Activated naive CD4-positive, alpha-beta T cell treated with anti-CD3 and anti-CD28 coated beads for 36 hours (primary cell): ENCODE measurements at regions of chr1 and their contacts with region 1.

Region 1: GRCh38 chr1:111720274-111720976 is 18.8 kb downstream of the INKA2 start:
- DNase-seq: no peak
- H3K4me3 Mint-ChIP-seq: no peak overlapping the region
- H3K27ac Mint-ChIP-seq: no peak overlapping the region
- H3K4me1 Mint-ChIP-seq: peaks cover 11% of the 10 kb centered on the region
- H3K27me3 Mint-ChIP-seq: no peaks in the 10 kb centered on the region

Region 2: DNA sequence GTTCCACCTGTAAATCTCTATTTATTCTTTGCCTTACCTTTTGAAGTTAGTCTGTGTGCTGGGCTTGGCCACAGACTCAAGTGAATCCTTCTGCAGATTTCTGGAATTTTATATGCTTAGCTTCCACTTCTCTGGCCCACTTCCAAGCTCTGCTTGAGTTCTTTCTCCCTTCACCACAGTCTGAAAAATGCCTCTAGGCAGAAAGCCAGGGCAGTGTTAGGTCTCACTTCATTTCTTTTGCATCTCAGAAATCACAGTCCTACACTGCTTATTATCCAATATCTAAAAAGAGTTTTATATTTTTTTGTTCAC is 30.2 kb before region 1 on chr1:
- CTCF ChIA-PET with region 1: interaction called, 14 read pairs
- intact Hi-C with region 1: no loop called
- DNase-seq: no peak
- H3K4me3 Mint-ChIP-seq: no peak overlapping the region
- H3K27ac Mint-ChIP-seq: peak overlapping the region; percentile 39
- H3K4me1 Mint-ChIP-seq: peaks cover 43% of the 10 kb centered on the region
- H3K27me3 Mint-ChIP-seq: no peaks in the 10 kb centered on the region

Region 3: GRCh38 chr1:111704776-111705175 is 15.6 kb before region 1 on chr1:
- CTCF ChIA-PET with region 1: interaction called, 22 read pairs
- intact Hi-C with region 1: no loop called
- DNase-seq: no peak
- H3K4me3 Mint-ChIP-seq: no peak overlapping the region
- H3K27ac Mint-ChIP-seq: no peak overlapping the region
- H3K4me1 Mint-ChIP-seq: peaks cover 27% of the 10 kb centered on the region
- H3K27me3 Mint-ChIP-seq: no peaks in the 10 kb centered on the region

Region 4: DNA sequence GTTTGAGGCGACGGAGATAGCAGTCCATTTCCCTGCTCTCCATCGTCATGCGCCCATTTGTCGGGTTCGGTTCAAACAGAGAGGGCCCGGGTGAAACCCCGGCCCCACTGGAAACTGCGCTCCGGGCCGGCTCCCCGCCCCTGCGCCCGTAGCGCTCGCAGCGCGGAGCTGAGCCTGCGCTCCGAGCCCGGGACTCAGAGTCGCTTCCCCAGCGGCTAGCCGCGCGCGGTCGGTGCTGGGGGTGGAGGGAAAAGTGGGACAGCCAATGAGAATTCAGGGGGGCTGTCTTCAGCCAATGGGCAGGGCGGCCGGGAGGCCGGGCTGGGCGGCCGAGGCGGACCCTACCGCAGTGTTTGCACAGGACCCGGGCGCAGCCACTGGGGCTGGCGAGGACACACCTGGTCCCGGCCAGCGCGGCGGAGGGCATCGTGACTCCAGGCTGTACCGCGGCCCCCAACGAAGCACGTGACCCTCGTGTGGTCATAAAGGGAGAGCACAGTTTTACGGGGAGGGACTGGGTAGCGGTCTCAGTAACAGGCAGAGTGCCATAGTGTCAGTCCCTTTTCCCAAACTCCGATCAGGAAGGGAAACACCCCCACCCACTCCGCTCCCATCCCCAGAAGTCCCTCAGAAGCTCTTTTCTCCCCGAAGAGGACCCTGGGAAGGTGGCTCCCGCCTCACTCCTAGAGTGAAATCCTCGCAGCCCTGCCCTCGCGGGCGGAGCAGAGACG is 18.9 kb after region 1 on chr1 and contains the start of gene INKA2:
- CTCF ChIA-PET with region 1: interaction called, 61 read pairs
- intact Hi-C with region 1: loop called (anchors 2 kb)
- DNase-seq: peak; percentile 82
- H3K4me3 Mint-ChIP-seq: peak within 1 kb of the TSS; percentile 87
- H3K27ac Mint-ChIP-seq: peak within 1 kb of the TSS; percentile 60
- H3K4me1 Mint-ChIP-seq: peaks cover 16% of the 10 kb centered on the region
- H3K27me3 Mint-ChIP-seq: peaks cover 35% of the 10 kb centered on the region
- total RNA-seq, gene INKA2: 1.9 to 3.2 TPM

Region 5: GRCh38 chr1:111747282-111747734 is 26.9 kb after region 1 on chr1:
- CTCF ChIA-PET with region 1: interaction called, 61 read pairs
- intact Hi-C with region 1: loop called (anchors 1 kb)
- DNase-seq: peak; percentile 88
- H3K4me3 Mint-ChIP-seq: no peak overlapping the region
- H3K27ac Mint-ChIP-seq: no peak overlapping the region
- H3K4me1 Mint-ChIP-seq: no peaks in the 10 kb centered on the region
- H3K27me3 Mint-ChIP-seq: no peaks in the 10 kb centered on the region

Region 6: GRCh38 chr1:111769517-111770146 is 49.2 kb after region 1 on chr1:
- CTCF ChIA-PET with region 1: interaction called, 38 read pairs
- intact Hi-C with region 1: loop called (anchors 1 kb)
- DNase-seq: peak; percentile 67
- H3K4me3 Mint-ChIP-seq: no peak overlapping the region
- H3K27ac Mint-ChIP-seq: no peak overlapping the region
- H3K4me1 Mint-ChIP-seq: peaks cover 12% of the 10 kb centered on the region
- H3K27me3 Mint-ChIP-seq: no peaks in the 10 kb centered on the region

Region 7: DNA sequence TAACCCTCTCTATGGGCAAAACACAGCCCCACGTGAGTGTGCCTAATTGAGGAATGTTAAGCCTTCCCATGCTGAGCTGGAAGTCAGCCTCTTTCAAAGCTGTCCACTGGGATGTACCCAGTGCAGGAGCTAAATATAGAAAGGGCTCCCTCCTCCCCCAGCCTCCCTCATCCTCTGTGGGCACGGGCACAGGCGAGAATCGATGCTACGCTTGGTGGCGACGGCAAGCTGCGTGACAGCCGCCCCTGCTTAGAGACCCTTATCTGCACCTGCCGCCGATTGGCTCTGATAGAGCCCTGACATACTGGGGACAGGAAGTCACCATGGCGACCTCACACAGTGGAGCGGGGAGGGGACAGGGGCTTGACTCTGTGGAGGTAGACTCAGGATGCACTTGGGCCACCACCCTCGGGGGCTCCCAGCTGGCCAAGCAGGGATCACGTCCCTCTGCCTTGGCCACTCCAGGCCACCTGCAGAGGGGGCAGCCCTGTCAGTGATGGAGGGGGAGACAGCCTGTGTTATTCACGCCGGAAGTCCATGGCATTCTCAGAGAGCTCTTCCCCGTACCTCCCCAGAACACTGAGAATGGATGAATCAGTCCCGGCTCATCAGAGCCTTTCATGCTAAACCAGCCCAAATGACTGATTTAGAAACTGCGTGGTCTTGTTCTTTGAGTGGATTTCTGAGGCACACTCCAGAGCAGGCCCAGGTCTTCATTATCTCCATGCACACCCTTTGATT is 184.2 kb after region 1 on chr1:
- CTCF ChIA-PET with region 1: no interaction called
- intact Hi-C with region 1: no loop called
- DNase-seq: peak; percentile 30
- H3K4me3 Mint-ChIP-seq: no peak overlapping the region
- H3K27ac Mint-ChIP-seq: no peak overlapping the region
- H3K4me1 Mint-ChIP-seq: peaks cover 2% of the 10 kb centered on the region
- H3K27me3 Mint-ChIP-seq: peaks cover 19% of the 10 kb centered on the region